Heart left ventricle (tissue), 16 donors: ENCODE measurements at regions of chr15 and their contacts with region 1.

Region 1: DNA sequence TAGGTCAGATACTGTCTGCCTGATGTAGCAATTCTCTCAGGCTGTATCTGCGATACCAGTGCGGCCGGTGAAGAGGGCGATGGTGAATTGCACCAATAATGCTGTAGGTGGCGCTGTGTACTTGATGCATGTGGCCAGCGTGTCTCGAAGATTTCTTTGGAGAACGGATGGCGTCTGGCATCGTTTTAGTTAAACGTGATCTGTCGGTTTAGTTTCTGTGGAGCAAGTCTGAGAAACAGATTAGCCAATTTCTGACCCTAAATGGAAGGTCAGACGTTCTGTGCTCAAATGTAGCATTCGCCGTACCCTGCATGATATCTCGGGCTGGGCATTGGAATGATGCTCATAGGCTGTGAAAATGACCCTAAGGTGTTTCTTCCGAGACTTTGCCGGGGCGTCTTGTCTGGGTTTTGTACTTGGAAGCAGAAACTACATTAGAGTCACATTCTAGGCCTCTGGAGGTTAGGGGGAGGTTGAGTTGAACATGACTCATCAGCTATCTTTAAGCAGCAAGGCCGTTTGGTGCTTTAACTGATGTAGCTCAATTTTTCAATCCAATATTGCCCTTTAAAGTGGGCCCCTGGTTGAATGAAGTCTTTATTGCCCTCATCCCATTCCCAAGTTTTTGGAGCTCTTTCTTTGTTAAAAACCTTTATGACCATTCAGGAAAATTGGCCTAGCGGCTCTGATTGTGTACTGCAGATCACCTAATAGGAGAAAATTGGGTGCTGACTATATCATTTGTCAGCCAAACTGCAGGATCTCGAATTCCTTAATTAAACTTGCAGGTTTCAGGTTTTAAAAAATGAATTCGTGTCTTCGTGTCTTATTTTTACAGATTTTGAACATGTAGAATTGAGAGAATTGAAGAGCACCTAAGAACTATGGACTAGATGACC is 80.0 kb downstream of the SQOR start:
- DNase-seq: peak; percentile 49 to 67 (median 58)
- ATAC-seq: peak in 3 of 4 donors; percentile 77 to 89 (median 79)
- H3K4me3 ChIP-seq: peak overlapping the region in 2 of 12 donors; percentile 12 to 25
- H3K27ac ChIP-seq: peak overlapping the region in 1 of 12 donors; percentile 45
- H3K4me1 ChIP-seq: peaks cover 0 to 13% (median 2%) of the 10 kb centered on the region in 12 donors
- H3K27me3 ChIP-seq: peaks cover 0 to 5% (median 0%) of the 10 kb centered on the region in 9 donors
- CTCF ChIP-seq: peak; percentile 78 to 94 (median 90)
- POLR2A ChIP-seq: no peak

Region 2: GRCh38 chr15:45535486-45536042 is 179.3 kb before region 1 on chr15:
- intact Hi-C with region 1: no loop called
- DNase-seq: no peak
- ATAC-seq: no peak
- H3K4me3 ChIP-seq: no peak overlapping the region
- H3K27ac ChIP-seq: no peak overlapping the region
- H3K4me1 ChIP-seq: no peaks in the 10 kb centered on the region
- H3K27me3 ChIP-seq: peaks cover 0 to 2% (median 0%) of the 10 kb centered on the region in 9 donors
- CTCF ChIP-seq: no peak
- POLR2A ChIP-seq: no peak

Region 3: DNA sequence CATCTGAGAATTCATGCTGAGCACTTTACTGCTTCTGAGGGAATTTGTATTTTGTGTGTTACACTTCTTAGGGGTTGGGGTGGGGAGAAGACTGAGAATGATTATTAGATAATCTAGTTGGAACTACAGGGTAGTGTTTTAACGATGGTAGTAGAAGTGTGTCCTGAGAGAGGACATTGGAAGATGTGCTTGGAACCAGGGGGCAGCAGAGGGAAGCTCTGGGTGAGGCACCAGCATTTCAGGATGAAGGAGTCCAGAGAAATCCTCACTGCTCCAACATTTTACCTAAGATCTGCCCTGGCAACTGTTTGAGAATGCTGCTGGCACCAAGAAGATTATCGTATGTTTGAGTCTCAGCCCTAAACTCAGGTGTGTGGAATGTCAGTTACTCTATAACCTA is 65.5 kb after region 1 on chr15:
- intact Hi-C with region 1: loop called in 1 of 10 experiments (anchors 2 kb)
- DNase-seq: no peak
- ATAC-seq: no peak
- H3K4me3 ChIP-seq: no peak overlapping the region
- H3K27ac ChIP-seq: no peak overlapping the region
- H3K4me1 ChIP-seq: no peaks in the 10 kb centered on the region
- H3K27me3 ChIP-seq: peaks cover 0 to 4% (median 0%) of the 10 kb centered on the region in 9 donors
- CTCF ChIP-seq: no peak
- POLR2A ChIP-seq: no peak

Region 4: GRCh38 chr15:46080016-46080415 is 365.2 kb after region 1 on chr15:
- intact Hi-C with region 1: loop called in 1 of 10 experiments (anchors 10 kb)
- DNase-seq: peak in 1 of 5 donors; percentile 62
- ATAC-seq: peak in 1 of 4 donors; percentile 44
- H3K4me3 ChIP-seq: no peak overlapping the region
- H3K27ac ChIP-seq: peak overlapping the region in 1 of 12 donors; percentile 16
- H3K4me1 ChIP-seq: peaks cover 0 to 13% (median 2%) of the 10 kb centered on the region in 12 donors
- H3K27me3 ChIP-seq: no peaks in the 10 kb centered on the region
- CTCF ChIP-seq: no peak
- POLR2A ChIP-seq: no peak

Region 5: DNA sequence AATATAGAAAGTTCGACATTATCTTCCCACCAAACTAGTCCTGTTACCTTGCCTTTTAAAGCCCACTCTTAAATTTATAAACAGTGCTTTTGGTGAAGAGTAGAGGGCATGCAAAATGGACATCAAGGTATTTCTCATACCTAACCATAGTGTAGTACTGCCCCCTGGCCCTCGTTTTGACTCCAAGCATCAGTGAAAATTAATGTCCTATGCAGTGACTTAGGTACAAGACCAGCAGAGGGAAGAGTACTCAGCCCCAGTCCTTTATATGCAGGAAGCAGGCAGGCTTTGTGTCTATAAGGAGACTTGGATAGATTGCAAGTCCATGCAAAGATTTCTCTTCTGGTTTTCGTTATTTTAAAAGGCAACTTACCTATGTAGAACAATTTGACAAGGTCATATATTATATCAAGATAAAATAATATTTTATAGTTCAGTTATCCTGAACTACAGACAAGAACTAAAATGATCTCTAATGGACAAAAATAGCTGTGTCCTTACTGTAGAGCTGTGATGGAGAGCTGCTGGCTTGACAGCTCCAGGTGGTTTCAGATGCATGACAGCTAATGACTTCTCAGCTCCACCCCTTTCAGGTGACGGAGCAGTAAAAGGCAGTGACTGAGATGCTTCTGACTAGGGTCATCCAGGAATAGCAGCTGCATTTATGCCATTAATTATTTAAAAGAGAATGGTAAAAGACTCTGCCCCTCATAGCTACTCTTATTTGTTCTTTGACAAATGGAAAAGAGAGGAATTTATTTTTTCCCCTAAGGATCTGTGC is 566.1 kb after region 1 on chr15:
- intact Hi-C with region 1: loop called in 1 of 10 experiments (anchors 10 kb)
- DNase-seq: no peak
- ATAC-seq: no peak
- H3K4me3 ChIP-seq: no peak overlapping the region
- H3K27ac ChIP-seq: no peak overlapping the region
- H3K4me1 ChIP-seq: no peaks in the 10 kb centered on the region
- H3K27me3 ChIP-seq: no peaks in the 10 kb centered on the region
- CTCF ChIP-seq: peak in 6 of 12 donors; percentile 12 to 37 (median 26)
- POLR2A ChIP-seq: no peak

Region 6: GRCh38 chr15:46312133-46312740 is 597.4 kb after region 1 on chr15:
- intact Hi-C with region 1: loop called in 2 of 10 experiments (anchors 10 kb)
- DNase-seq: peak in 4 of 5 donors; percentile 52 to 67 (median 59)
- ATAC-seq: peak; percentile 47 to 94 (median 85)
- H3K4me3 ChIP-seq: no peak overlapping the region
- H3K27ac ChIP-seq: no peak overlapping the region
- H3K4me1 ChIP-seq: peaks cover 0 to 21% (median 0%) of the 10 kb centered on the region in 12 donors
- H3K27me3 ChIP-seq: no peaks in the 10 kb centered on the region
- CTCF ChIP-seq: peak; percentile 81 to 96 (median 87)
- POLR2A ChIP-seq: no peak